Activated naive CD4-positive, alpha-beta T cell treated with anti-CD3 and anti-CD28 coated beads for 36 hours (primary cell): ENCODE measurements at regions of chr1 and their contacts with region 1.

Region 1: GRCh38 chr1:51768971-51769588 is 109.4 kb downstream of the NRDC start:
- DNase-seq: peak; percentile 37
- H3K4me3 Mint-ChIP-seq: no peak overlapping the region
- H3K27ac Mint-ChIP-seq: no peak overlapping the region
- H3K4me1 Mint-ChIP-seq: peaks cover 10% of the 10 kb centered on the region
- H3K27me3 Mint-ChIP-seq: no peaks in the 10 kb centered on the region

Region 2: DNA sequence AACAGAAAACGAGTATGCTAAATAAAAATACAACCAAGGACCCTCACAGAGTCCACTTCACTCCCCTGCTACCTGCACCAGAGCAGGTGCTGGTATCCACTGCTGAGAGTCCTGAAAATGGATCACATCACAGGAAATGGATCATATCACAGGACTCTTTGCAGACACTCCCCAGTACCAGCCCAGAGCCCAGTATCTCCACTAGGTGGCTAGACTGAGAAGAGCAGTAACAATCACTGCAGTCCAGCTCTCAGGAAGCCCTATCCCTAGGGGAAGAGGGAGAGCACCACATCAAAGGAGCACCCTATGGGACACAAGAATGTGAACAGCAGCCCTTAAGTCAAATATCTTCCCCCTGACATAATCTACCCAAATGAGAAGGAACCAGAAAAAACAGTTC is 1773.3 kb before region 1 on chr1:
- CTCF ChIA-PET with region 1: no interaction called
- intact Hi-C with region 1: no loop called
- DNase-seq: no peak
- H3K4me3 Mint-ChIP-seq: no peak overlapping the region
- H3K27ac Mint-ChIP-seq: no peak overlapping the region
- H3K4me1 Mint-ChIP-seq: no peaks in the 10 kb centered on the region
- H3K27me3 Mint-ChIP-seq: peaks cover 3% of the 10 kb centered on the region

Region 3: DNA sequence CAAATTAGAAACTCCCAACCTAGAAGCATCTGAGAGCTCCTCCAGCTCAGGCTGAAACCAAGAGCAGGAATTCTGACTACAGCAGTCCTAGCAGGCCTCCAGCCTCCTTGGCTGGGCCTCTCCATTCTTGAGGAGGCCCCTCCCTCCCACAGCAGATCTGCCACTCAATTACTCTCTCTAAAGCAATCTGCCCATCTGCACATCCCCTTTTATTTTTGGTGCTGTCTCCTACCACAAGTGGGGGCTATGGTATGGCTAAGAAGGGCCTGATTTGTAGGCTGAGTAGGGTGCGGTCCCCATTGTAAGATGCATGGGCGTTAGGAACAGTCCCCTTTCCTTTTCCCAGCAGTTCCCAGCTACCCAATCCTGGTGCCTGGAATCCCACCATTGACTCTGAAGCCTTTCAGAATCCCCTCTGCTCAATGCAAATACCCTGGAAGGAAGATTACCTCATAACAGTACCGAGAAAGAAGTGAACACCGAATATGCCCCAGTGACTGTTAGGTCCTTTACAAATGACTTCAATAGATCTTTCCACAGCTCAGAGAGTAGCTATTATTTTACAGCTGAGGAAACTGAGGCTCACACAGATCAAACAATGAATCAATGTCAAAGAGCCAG is 427.1 kb before region 1 on chr1:
- CTCF ChIA-PET with region 1: interaction called, 3 read pairs
- intact Hi-C with region 1: loop called (anchors 10 kb)
- DNase-seq: no peak
- H3K4me3 Mint-ChIP-seq: no peak overlapping the region
- H3K27ac Mint-ChIP-seq: no peak overlapping the region
- H3K4me1 Mint-ChIP-seq: peaks cover 5% of the 10 kb centered on the region
- H3K27me3 Mint-ChIP-seq: peaks cover 44% of the 10 kb centered on the region

Region 4: GRCh38 chr1:51627678-51628077 is 141.4 kb before region 1 on chr1:
- CTCF ChIA-PET with region 1: interaction called, 14 read pairs
- intact Hi-C with region 1: loop called (anchors 1 kb)
- DNase-seq: peak; percentile 14
- H3K4me3 Mint-ChIP-seq: no peak overlapping the region
- H3K27ac Mint-ChIP-seq: no peak overlapping the region
- H3K4me1 Mint-ChIP-seq: peaks cover 27% of the 10 kb centered on the region
- H3K27me3 Mint-ChIP-seq: no peaks in the 10 kb centered on the region

Region 5: GRCh38 chr1:51734896-51735745 is 34.0 kb before region 1 on chr1:
- CTCF ChIA-PET with region 1: interaction called, 14 read pairs
- intact Hi-C with region 1: no loop called
- DNase-seq: no peak
- H3K4me3 Mint-ChIP-seq: no peak overlapping the region
- H3K27ac Mint-ChIP-seq: no peak overlapping the region
- H3K4me1 Mint-ChIP-seq: peaks cover 50% of the 10 kb centered on the region
- H3K27me3 Mint-ChIP-seq: no peaks in the 10 kb centered on the region